ENCODE measurements at regions of chr17 and their contacts with region 1.

Region 1: DNA sequence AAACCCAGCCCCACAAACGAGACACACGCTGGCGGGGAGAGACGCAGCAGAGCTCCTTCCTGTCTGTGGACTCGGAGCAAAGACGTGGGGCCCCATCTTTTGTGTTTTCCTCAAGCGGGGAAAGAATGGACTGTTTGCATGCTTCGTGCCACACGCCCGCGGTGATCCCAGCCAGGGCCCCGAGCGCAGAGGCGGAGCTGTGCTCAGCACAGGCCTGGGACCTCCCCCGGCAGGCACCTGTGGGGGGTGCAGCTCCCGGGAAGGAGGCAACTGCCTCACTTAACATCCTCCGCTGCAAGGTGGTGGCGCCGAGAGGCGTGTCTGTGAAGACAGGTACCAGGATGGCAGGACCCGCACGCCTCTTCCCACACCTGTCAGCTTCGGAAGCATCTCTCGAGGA is 19.1 kb downstream of the TRARG1 start:
- DNase-seq: peak; percentile 10 to 70 (median 42)
- ATAC-seq: peak; percentile 45
- H3K4me3 ChIP-seq: peak overlapping the region; percentile 35
- H3K4me3 Mint-ChIP-seq: peak overlapping the region; percentile 54
- H3K27ac ChIP-seq: no peak overlapping the region
- H3K27ac Mint-ChIP-seq: no peak overlapping the region
- H3K4me1 ChIP-seq: peaks cover 61% of the 10 kb centered on the region
- H3K4me1 Mint-ChIP-seq: peaks cover 40% of the 10 kb centered on the region
- H3K27me3 ChIP-seq: peaks cover 2 to 7% of the 10 kb centered on the region in 2 experiments
- H3K27me3 Mint-ChIP-seq: peaks cover 5% of the 10 kb centered on the region
- CTCF ChIP-seq: no peak

Region 2: DNA sequence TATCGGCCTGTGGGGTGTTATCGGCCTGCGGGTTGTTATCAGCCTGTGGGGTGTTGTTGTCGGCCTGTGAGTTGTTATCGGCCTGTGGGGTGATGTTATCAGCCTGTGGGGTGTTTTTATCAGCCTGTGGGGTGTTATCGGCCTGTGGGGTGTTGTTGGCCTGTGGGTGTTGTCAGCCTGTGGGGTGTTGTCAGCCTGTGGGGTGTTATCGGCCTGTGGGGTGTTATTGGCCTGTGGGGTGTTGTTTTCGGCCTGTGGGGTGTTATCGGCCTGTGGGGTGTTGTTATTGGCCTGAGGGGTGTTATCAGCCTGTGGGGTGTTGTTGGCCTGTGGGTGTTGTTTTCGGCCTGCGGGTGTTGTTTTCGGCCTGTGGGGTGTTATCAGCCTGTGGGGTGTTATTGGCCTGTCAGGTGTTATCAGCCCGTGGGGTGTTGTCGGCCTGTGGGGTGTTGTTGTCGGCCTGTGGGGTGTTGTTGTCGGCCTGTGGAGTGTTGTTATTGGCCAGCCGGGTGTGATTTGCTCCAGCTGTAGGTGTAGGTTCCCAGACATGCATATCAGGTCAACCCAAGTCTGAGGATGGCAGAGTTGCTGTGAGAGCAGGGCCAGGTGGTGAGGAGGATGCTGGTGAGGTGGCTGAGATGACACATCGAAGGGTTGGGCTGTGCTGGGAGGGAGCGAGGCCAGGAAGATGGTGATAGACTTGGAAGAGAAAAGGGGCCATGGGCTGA is 12.1 kb before region 1 on chr17:
- CTCF ChIA-PET with region 1: no interaction called
- POLR2A ChIA-PET with region 1: no interaction called
- intact Hi-C with region 1: loop called in 1 of 2 experiments (anchors 2 kb)
- DNase-seq: no peak
- ATAC-seq: no peak
- H3K4me3 ChIP-seq: no peak overlapping the region
- H3K4me3 Mint-ChIP-seq: no peak overlapping the region
- H3K27ac ChIP-seq: no peak overlapping the region
- H3K27ac Mint-ChIP-seq: no peak overlapping the region
- H3K4me1 ChIP-seq: no peaks in the 10 kb centered on the region
- H3K4me1 Mint-ChIP-seq: no peaks in the 10 kb centered on the region
- H3K27me3 ChIP-seq: no peaks in the 10 kb centered on the region
- H3K27me3 Mint-ChIP-seq: no peaks in the 10 kb centered on the region
- CTCF ChIP-seq: no peak